Thyroid gland (tissue), 4 donors: ENCODE measurements at regions of chr20 and their contacts with region 1.

Region 1: GRCh38 chr20:57498425-57499400 is 26.2 kb downstream of the CTCFL start:
- DNase-seq: peak; percentile 28 to 51
- H3K4me3 ChIP-seq: no peak overlapping the region
- H3K27ac ChIP-seq: no peak overlapping the region
- H3K4me1 ChIP-seq: peaks cover 0 to 12% of the 10 kb centered on the region in 2 donors
- H3K27me3 ChIP-seq: no peaks in the 10 kb centered on the region
- CTCF ChIP-seq: peak in 2 of 6 experiments; percentile 10 to 24
- POLR2A ChIP-seq: no peak

Region 2: GRCh38 chr20:57382027-57382503 is 116.6 kb before region 1 on chr20:
- intact Hi-C with region 1: loop called (anchors 5 kb)
- DNase-seq: no peak
- H3K4me3 ChIP-seq: no peak overlapping the region
- H3K27ac ChIP-seq: no peak overlapping the region
- H3K4me1 ChIP-seq: no peaks in the 10 kb centered on the region
- H3K27me3 ChIP-seq: no peaks in the 10 kb centered on the region
- CTCF ChIP-seq: no peak
- POLR2A ChIP-seq: no peak

Region 3: DNA sequence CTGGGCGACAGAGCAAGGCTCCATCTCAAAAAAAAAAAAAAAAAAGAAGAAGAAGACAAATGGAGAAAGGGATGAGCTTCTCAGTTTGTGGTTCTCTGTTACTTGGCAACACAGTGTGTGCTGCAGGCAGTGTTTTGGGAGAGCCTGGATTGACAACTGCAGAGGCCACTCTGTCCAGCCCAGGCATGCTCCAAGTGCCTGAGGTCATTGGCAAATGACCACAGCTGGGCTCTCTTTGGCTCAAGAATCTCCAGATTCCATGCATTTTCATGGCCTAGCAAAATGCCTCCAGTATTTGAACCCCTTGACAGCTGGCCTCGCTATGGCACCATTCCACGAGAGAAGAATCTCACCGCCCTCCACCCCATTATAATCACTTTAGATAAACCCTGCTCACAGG is 603.5 kb after region 1 on chr20:
- intact Hi-C with region 1: no loop called
- DNase-seq: no peak
- H3K4me3 ChIP-seq: no peak overlapping the region
- H3K27ac ChIP-seq: no peak overlapping the region
- H3K4me1 ChIP-seq: no peaks in the 10 kb centered on the region
- H3K27me3 ChIP-seq: no peaks in the 10 kb centered on the region
- CTCF ChIP-seq: no peak
- POLR2A ChIP-seq: no peak